MCF 10A (cell line): ENCODE measurements at regions of chr15 and their contacts with region 1.

Region 1: GRCh38 chr15:68550481-68551295 is 28.1 kb upstream of the CORO2B start:
- DNase-seq: peak; percentile 72
- H3K4me3 Mint-ChIP-seq: no peak overlapping the region
- H3K27ac Mint-ChIP-seq: no peak overlapping the region
- H3K4me1 Mint-ChIP-seq: no peaks in the 10 kb centered on the region
- H3K27me3 Mint-ChIP-seq: peaks cover 20% of the 10 kb centered on the region
- CTCF ChIP-seq: peak; percentile 84

Region 2: DNA sequence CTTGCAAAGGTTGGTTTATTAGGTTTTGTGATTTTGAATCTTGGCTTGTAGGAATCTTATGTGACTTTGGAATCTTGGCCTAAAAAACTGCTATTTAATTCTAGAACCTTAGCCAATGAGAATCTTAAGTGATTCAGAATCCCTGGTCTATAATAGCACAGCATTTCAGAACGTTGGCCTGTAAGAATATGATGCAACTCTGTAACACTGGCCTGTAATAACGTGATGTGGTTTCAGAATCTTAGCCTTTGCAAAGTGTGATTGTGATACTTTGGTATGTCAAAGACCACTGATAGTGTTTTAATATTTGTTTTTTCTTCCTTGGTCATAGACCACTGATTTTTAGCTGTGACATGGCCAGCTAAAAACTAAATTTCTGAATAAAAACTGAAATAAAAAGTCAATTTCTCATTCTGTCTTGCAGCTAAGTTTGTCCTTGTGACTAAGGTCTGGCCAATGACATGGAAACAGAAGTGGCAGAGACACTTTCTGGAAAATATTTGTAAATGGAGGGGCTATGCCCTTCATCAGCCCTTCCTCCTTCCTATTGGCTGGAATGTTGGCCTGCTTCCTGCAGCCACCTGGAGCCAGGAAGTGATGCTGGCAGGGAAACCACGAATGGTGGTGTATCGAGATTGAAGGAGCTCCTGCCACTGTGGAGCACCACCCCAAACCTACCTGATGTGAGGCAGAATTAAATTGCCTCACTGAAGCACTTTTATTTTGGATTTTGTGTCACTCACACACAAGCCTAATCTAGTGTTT is 14.2 kb before region 1 on chr15:
- CTCF ChIA-PET with region 1: interaction called, 36 read pairs
- POLR2A ChIA-PET with region 1: no interaction called
- intact Hi-C with region 1: no loop called
- DNase-seq: peak; percentile 42
- H3K4me3 Mint-ChIP-seq: no peak overlapping the region
- H3K27ac Mint-ChIP-seq: peak overlapping the region; percentile 66
- H3K4me1 Mint-ChIP-seq: no peaks in the 10 kb centered on the region
- H3K27me3 Mint-ChIP-seq: no peaks in the 10 kb centered on the region
- CTCF ChIP-seq: no peak

Region 3: DNA sequence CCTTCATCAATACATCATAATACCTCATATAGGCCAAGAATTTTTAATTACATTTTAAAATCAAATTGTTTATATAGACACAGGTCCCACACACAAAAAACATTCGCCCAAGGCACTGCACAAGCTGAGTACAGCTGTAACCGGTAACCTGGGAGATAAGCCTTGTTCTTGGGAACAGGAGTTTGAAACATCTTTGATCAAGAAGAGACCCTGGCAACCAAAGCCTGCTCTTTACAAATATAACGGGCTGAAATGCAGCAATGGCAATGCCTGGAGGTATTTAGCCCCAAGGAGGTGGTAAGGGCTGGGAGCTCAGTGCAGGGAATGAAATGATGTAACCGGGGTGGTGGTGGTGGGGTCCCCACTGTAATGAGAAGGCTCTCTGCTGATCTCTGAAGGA is 20.9 kb after region 1 on chr15:
- CTCF ChIA-PET with region 1: interaction called, 12 read pairs
- POLR2A ChIA-PET with region 1: no interaction called
- intact Hi-C with region 1: no loop called
- DNase-seq: no peak
- H3K4me3 Mint-ChIP-seq: no peak overlapping the region
- H3K27ac Mint-ChIP-seq: no peak overlapping the region
- H3K4me1 Mint-ChIP-seq: no peaks in the 10 kb centered on the region
- H3K27me3 Mint-ChIP-seq: peaks cover 14% of the 10 kb centered on the region
- CTCF ChIP-seq: no peak

Region 4: DNA sequence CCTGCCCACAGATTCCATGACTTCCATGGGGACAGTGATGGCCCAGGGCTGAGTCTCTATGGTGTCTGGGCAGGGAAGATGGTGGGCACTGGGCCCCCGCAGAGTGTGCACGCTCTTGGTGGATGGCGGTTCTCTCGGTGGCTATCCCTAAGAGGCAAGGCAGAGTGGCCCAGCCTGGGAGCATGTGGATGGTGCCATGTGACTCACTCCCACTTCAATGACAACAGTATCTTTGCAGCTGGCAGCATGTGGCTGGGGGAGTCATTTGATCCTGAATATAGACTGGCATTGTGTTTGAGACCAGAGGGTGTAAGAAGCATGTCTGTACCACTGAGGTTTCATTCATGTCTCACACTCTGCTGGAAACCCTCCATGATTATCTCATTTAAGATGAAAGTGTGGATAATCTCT is 129.3 kb after region 1 on chr15:
- CTCF ChIA-PET with region 1: interaction called, 121 read pairs
- POLR2A ChIA-PET with region 1: no interaction called
- intact Hi-C with region 1: no loop called
- DNase-seq: no peak
- H3K4me3 Mint-ChIP-seq: no peak overlapping the region
- H3K27ac Mint-ChIP-seq: no peak overlapping the region
- H3K4me1 Mint-ChIP-seq: peaks cover 6% of the 10 kb centered on the region
- H3K27me3 Mint-ChIP-seq: no peaks in the 10 kb centered on the region
- CTCF ChIP-seq: no peak

Region 5: GRCh38 chr15:68715111-68715510 is 164.4 kb after region 1 on chr15:
- CTCF ChIA-PET with region 1: no interaction called
- POLR2A ChIA-PET with region 1: no interaction called
- intact Hi-C with region 1: no loop called
- DNase-seq: no peak
- H3K4me3 Mint-ChIP-seq: no peak overlapping the region
- H3K27ac Mint-ChIP-seq: no peak overlapping the region
- H3K4me1 Mint-ChIP-seq: no peaks in the 10 kb centered on the region
- H3K27me3 Mint-ChIP-seq: peaks cover 35% of the 10 kb centered on the region
- CTCF ChIP-seq: no peak

Region 6: GRCh38 chr15:68924866-68925560 is 374.3 kb after region 1 on chr15:
- CTCF ChIA-PET with region 1: interaction called, 54 read pairs
- POLR2A ChIA-PET with region 1: no interaction called
- intact Hi-C with region 1: loop called (anchors 2 kb)
- DNase-seq: peak; percentile 83
- H3K4me3 Mint-ChIP-seq: no peak overlapping the region
- H3K27ac Mint-ChIP-seq: no peak overlapping the region
- H3K4me1 Mint-ChIP-seq: peaks cover 10% of the 10 kb centered on the region
- H3K27me3 Mint-ChIP-seq: peaks cover 11% of the 10 kb centered on the region
- CTCF ChIP-seq: peak; percentile 87